ENCODE measurements at regions of chr3 and their contacts with region 1.

Region 1: GRCh38 chr3:112832735-112833134 is 13.9 kb downstream of the CD200R1L start:
- DNase-seq: no peak
- ATAC-seq: no peak
- H3K4me3 ChIP-seq: no peak overlapping the region
- H3K27ac ChIP-seq: no peak overlapping the region
- H3K4me1 ChIP-seq: no peaks in the 10 kb centered on the region
- H3K27me3 ChIP-seq: no peaks in the 10 kb centered on the region
- CTCF ChIP-seq: no peak

Region 2: GRCh38 chr3:112734718-112735350 is 97.9 kb before region 1 on chr3:
- intact Hi-C with region 1: no loop called
- DNase-seq: peak in 1 of 2 donors; percentile 62
- ATAC-seq: peak in 6 of 8 donors; percentile 46 to 75 (median 72)
- H3K4me3 ChIP-seq: no peak overlapping the region
- H3K27ac ChIP-seq: no peak overlapping the region
- H3K4me1 ChIP-seq: peaks cover 0 to 27% (median 0%) of the 10 kb centered on the region in 9 donors
- H3K27me3 ChIP-seq: peaks cover 0 to 6% (median 0%) of the 10 kb centered on the region in 7 donors
- CTCF ChIP-seq: peak; percentile 32 to 78 (median 65)

Region 3: DNA sequence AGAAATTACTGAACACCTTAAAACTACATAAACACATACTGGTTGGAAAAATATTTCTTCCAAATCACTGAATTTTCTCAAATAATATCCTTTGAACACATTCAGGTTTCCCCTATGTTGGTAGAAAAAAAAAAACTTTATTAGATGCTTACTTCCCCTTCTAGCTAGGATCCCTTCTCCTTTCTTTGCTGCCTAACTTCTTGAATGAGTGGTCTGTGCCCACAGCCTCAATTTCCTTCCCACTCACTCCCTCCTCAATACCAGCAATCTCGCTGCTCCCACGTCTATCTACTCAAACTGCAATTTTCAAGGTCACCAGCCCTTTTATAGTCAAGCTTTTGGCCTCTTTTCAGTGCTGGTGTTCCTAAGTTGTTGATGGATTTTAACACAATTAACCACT is 133.9 kb after region 1 on chr3:
- intact Hi-C with region 1: loop called in 1 of 10 experiments (anchors 10 kb)
- DNase-seq: no peak
- ATAC-seq: peak in 3 of 8 donors; percentile 41 to 49 (median 42)
- H3K4me3 ChIP-seq: no peak overlapping the region
- H3K27ac ChIP-seq: peak overlapping the region in 1 of 10 donors; percentile 32
- H3K4me1 ChIP-seq: peaks cover 0 to 44% (median 0%) of the 10 kb centered on the region in 9 donors
- H3K27me3 ChIP-seq: peaks cover 0 to 19% (median 4%) of the 10 kb centered on the region in 7 donors
- CTCF ChIP-seq: no peak